ENCODE measurements at regions of chr6 and their contacts with region 1.

Region 1: DNA sequence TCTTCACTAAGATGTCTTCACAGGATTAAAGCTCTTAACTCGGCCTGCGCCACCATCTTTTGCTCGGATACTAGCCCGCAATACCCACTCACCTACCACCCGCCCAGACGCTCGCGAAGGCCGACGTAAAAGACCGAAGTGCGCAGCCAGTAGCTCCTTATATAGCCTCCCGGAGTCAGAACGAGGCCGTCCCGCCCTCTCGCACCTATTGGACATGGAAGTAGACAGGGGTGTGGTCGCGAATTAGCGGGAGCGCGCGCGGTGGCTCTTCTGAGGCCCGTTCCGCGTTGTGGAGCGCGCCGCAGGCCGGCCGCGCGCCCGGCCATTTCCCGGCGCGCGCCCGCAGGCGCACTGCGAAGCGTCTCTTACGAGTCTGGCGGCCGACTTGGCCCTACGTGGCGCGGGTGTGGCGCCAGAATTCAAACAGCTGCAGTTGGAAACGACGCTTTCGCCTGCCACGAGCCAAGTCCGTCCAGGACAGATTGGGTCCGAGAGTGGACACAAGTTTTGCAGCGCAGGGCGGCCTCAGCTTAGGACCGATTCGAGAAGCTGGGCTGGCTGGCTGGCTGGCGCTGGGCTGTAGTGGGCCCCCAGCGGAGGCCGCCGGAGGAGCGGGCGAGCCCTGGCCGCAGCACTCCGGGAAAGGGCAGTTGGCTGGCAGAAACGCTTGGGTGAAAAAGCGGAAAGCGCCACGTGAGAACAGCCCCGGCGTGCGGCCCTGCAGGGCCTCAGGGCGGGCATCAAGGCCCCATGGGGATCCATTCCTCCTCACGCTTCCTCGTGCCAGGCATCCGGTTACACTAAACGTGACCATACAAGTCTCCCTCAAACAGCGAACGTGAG is 36.1 kb upstream of the SYNCRIP start:
- DNase-seq: peak; percentile 98
- ATAC-seq: peak; percentile 99

Region 2: DNA sequence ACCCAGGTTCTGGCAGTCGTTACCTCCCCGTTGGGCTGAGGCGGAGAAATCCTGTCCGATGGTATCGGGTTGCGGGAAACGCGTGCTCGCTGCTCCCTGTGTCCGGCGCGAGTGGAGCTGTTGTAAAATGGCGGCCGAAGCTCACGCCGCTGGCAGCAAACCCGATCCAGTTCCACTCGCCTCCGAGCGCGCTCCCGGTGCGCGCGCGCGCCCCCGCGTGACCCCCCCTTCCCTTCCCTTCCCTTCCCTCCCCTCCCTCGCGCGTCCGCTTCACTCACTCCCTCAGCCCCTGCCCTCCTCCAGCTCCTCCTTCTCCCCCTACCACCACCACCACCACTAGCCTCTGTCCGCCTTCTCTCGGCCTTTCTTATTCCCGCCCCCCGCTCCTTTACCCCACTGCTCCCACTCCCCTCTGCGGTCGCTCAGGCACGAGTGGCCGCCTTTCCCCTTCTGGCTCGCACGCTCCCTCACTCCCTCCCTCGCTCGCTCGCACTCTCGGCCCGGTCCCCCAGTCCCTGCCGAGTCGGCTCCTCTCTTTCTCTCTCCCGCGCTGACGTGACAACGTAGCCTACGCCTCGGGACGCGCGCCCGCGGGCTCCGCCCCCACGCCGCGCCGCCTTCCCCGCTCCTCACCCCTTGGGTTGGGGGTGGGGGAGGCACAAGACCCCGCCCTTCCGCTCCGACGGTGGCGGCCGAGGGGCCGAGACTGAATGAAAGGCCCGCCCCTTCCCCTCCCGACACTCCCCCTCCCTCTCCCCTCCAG is 35.9 kb before region 1 on chr6 and contains the start of gene SYNCRIP:
- intact Hi-C with region 1: loop called (anchors 5 kb)
- DNase-seq: peak; percentile 100
- ATAC-seq: peak; percentile 89
- total RNA-seq, gene SYNCRIP: 62.2 TPM

Region 3: GRCh38 chr6:85797993-85798392 is 119.2 kb after region 1 on chr6:
- intact Hi-C with region 1: no loop called
- DNase-seq: no peak
- ATAC-seq: no peak

Measured in left ventricle myocardium superior (tissue), 1 donor.